Thyroid gland (tissue), 4 donors: ENCODE measurements at regions of chr18 and their contacts with region 1.

Region 1: GRCh38 chr18:58781627-58782194 is 83.0 kb upstream of the ZNF532 start:
- DNase-seq: peak; percentile 76 to 82
- H3K4me3 ChIP-seq: no peak overlapping the region
- H3K27ac ChIP-seq: no peak overlapping the region
- H3K4me1 ChIP-seq: peaks cover 0 to 13% of the 10 kb centered on the region in 2 donors
- H3K27me3 ChIP-seq: no peaks in the 10 kb centered on the region
- CTCF ChIP-seq: peak; percentile 52 to 99 (median 88)
- POLR2A ChIP-seq: no peak

Region 2: DNA sequence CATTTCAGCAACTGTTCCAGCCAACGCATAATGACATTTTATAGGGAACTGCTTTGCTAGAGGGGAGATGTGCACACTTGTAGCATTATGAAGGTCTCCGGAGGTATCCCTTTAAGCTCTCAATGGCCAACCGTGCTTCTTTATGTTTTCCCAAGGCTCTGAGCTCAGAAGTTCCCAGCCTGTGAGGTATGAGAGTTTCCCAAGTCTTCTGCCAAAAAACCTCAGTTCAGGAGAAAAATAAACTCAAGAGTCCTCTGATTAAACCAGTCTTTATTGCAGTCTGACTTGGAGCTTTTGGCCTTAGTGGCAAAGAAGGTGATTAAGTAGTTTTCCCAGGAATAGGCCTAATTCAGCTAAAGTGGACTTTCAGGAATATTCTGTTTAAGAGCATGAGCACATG is 47.6 kb after region 1 on chr18:
- intact Hi-C with region 1: no loop called
- DNase-seq: no peak
- H3K4me3 ChIP-seq: no peak overlapping the region
- H3K27ac ChIP-seq: no peak overlapping the region
- H3K4me1 ChIP-seq: peaks cover 0 to 6% of the 10 kb centered on the region in 2 donors
- H3K27me3 ChIP-seq: no peaks in the 10 kb centered on the region
- CTCF ChIP-seq: no peak
- POLR2A ChIP-seq: no peak

Region 3: DNA sequence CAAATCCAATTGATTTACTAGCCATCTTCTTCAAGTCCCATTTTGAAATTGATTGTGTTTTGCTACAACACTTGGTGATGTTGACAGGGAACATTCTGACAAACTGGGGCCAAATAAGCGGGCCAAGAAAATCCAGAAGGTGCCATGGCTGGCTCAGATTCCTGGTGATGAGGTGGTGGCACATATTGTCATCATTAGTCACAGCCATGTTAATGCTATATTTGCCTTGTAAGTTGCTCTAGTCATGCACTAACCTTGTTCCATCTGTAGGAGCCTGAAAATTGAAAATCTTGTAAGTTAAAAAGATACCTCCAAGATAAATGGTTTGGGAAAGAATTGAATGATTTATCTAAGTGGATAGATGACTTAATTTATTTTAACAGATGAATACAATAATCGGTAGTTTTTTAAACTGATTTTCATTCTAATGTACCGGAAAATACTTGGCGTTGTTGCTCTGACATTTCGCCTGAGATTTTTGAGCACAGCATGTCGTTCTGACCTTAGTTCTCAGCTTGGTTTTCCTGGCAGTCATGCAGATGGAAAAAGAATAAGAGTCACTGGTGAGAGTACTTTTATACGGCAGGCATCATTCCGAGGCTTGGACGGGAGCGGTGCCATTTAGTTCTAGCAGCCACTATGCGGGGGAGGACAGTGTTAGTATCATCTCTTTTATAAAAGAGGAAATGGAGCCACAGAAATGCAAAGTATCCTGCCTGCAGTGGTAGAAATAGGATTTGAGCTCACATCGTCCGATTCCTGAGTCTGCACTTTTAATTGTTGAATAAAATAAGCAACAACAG is 216.9 kb after region 1 on chr18:
- intact Hi-C with region 1: loop called (anchors 10 kb)
- DNase-seq: peak in 1 of 2 donors; percentile 27
- H3K4me3 ChIP-seq: no peak overlapping the region
- H3K27ac ChIP-seq: peak overlapping the region; percentile 12 to 61 (median 57)
- H3K4me1 ChIP-seq: peaks cover 3 to 18% of the 10 kb centered on the region in 2 donors
- H3K27me3 ChIP-seq: no peaks in the 10 kb centered on the region
- CTCF ChIP-seq: no peak
- POLR2A ChIP-seq: no peak

Region 4: GRCh38 chr18:59056706-59057492 is 275.2 kb after region 1 on chr18:
- intact Hi-C with region 1: loop called (anchors 2 kb)
- DNase-seq: peak; percentile 60 to 88
- H3K4me3 ChIP-seq: no peak overlapping the region
- H3K27ac ChIP-seq: no peak overlapping the region
- H3K4me1 ChIP-seq: peaks cover 25 to 38% of the 10 kb centered on the region in 2 donors
- H3K27me3 ChIP-seq: no peaks in the 10 kb centered on the region
- CTCF ChIP-seq: peak in 5 of 6 experiments; percentile 77 to 97 (median 87)
- POLR2A ChIP-seq: no peak

Region 5: GRCh38 chr18:59070181-59070912 is 288.6 kb after region 1 on chr18:
- intact Hi-C with region 1: loop called (anchors 5 kb)
- DNase-seq: peak; percentile 87 to 88
- H3K4me3 ChIP-seq: no peak overlapping the region
- H3K27ac ChIP-seq: no peak overlapping the region
- H3K4me1 ChIP-seq: no peaks in the 10 kb centered on the region
- H3K27me3 ChIP-seq: no peaks in the 10 kb centered on the region
- CTCF ChIP-seq: peak; percentile 25 to 87 (median 79)
- POLR2A ChIP-seq: no peak